ENCODE measurements at regions of chr10 and their contacts with region 1.

Region 1: GRCh38 chr10:15571575-15571974 is 148.1 kb downstream of the ITGA8 start:
- DNase-seq: no peak
- H3K4me3 ChIP-seq: no peak overlapping the region
- H3K27ac ChIP-seq: no peak overlapping the region
- H3K4me1 ChIP-seq: no peaks in the 10 kb centered on the region
- H3K27me3 ChIP-seq: no peaks in the 10 kb centered on the region
- CTCF ChIP-seq: no peak

Region 2: DNA sequence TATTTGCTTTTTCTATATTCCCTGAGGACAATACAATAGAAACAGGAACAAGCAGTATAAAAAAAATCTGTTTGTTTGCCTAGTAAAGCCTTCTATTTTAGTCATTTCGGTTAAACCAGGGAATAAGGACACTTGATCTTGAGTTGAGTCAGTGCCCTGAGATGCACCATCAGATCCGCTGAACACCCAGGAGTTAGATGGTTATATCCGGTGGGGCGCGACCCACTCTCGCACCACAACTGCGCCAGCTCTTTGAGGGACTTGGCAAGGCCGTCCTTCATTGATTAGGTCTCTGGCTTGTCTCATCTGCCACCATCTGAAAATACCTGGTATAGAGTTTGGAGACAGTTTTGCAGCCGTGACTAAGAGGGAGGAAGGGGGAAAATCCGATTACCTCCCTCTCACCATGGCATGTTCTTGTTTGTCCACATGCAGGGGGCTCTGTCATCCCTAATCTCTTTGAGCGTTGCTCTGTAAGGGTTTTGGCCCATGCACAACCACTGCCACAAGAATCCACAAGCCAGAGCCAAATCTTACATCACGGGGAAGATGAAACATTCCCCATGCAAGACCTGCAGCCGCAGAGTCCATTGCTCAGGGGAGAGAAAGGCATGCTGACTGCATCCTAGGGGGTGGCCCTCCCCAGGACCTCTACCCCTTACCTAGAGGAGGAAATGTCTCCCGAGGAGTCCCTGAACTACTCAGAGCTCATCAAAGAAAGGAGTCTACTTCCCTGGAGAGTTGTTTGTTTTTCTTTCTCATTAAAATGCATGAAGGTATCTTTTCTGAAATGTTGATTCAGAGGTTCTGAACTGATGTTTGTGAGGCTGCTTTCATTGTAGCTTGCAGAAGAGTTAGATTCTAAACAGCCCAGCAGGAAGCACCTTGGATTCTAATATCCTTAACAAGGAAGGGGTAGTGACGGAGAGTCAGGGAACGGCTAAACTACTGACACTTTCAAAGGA is 98.9 kb before region 1 on chr10:
- CTCF ChIA-PET with region 1: no interaction called
- dilution Hi-C with region 1: no loop called
- in situ Hi-C with region 1: no loop called
- intact Hi-C with region 1: no loop called
- DNase-seq: no peak
- H3K4me3 ChIP-seq: no peak overlapping the region
- H3K27ac ChIP-seq: no peak overlapping the region
- H3K4me1 ChIP-seq: no peaks in the 10 kb centered on the region
- H3K27me3 ChIP-seq: no peaks in the 10 kb centered on the region
- CTCF ChIP-seq: no peak

Region 3: DNA sequence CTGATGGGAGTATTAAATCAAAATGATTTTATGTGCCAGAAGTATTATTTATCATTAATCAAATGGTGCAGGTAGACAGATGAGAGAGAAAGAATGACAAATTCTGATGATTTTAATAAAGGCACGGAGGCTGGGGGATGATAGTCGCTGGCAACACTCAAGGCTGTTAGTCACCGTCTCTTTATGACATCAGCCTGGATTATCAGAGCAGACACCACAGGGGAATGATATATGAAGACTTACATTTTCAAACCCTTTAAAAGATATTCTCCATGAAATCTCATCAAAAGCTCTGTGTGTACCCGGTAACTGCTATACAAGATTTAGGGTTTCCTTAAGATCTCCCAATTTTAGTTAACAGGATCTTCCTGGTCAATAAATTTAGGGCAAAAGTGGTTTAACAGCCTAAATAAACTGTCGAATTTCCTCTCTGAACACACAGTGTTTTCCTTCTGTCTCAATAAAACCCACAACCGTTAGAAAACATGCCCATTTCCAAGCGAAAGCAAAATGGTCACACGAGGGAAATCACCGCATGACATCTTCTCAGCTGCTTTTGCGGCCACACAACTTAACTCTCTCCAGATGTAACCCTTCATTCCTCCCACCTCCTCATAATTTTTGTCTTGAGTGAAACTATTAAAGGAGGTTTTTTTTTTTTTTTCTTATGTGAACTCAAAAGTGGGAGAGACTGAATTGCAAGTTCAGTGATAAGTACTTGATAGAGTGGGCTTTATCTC is 67.3 kb before region 1 on chr10:
- CTCF ChIA-PET with region 1: no interaction called
- dilution Hi-C with region 1: loop called (anchors 5 kb)
- in situ Hi-C with region 1: no loop called
- intact Hi-C with region 1: no loop called
- DNase-seq: no peak
- H3K4me3 ChIP-seq: no peak overlapping the region
- H3K27ac ChIP-seq: no peak overlapping the region
- H3K4me1 ChIP-seq: no peaks in the 10 kb centered on the region
- H3K27me3 ChIP-seq: no peaks in the 10 kb centered on the region
- CTCF ChIP-seq: no peak

Region 4: GRCh38 chr10:15531927-15532722 is 39.5 kb before region 1 on chr10:
- CTCF ChIA-PET with region 1: no interaction called
- dilution Hi-C with region 1: no loop called
- in situ Hi-C with region 1: no loop called
- intact Hi-C with region 1: no loop called
- DNase-seq: no peak
- H3K4me3 ChIP-seq: no peak overlapping the region
- H3K27ac ChIP-seq: no peak overlapping the region
- H3K4me1 ChIP-seq: no peaks in the 10 kb centered on the region
- H3K27me3 ChIP-seq: no peaks in the 10 kb centered on the region
- CTCF ChIP-seq: no peak

Measured in mammary epithelial cell (primary cell).